Activated B cell treated with CpG ODN at 0.5 μM for 24 hours (primary cell): ENCODE measurements at regions of chr1 and their contacts with region 1.

Region 1: DNA sequence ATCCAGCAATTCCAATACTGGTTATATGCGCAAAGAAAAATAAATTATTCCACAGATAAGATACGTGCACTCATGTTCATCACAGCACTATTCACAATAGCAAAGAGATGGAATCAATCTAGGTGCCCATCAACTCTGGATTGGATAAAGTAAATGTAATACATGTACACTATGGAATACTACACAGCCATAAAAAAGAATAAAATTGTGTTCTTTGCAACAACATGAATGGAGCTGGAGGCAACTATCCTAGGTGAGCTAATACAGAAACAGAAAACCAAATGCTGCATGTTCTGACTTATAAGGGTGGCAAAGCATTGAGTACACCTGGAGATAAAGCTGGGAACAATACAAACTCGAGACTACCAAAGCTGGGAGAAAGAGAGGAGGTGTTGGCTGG is 787.3 kb downstream of the KCNT2 start:
- DNase-seq: no peak
- ATAC-seq: no peak
- H3K4me3 Mint-ChIP-seq: no peak overlapping the region
- H3K27ac Mint-ChIP-seq: no peak overlapping the region
- H3K4me1 Mint-ChIP-seq: no peaks in the 10 kb centered on the region
- H3K27me3 Mint-ChIP-seq: no peaks in the 10 kb centered on the region
- CTCF ChIP-seq: no peak

Region 2: GRCh38 chr1:196007785-196008184 is 186.9 kb after region 1 on chr1:
- CTCF ChIA-PET with region 1: no interaction called
- POLR2A ChIA-PET with region 1: interaction called, 11 read pairs
- intact Hi-C with region 1: no loop called
- DNase-seq: no peak
- ATAC-seq: no peak
- H3K4me3 Mint-ChIP-seq: no peak overlapping the region
- H3K27ac Mint-ChIP-seq: no peak overlapping the region
- H3K4me1 Mint-ChIP-seq: no peaks in the 10 kb centered on the region
- H3K27me3 Mint-ChIP-seq: no peaks in the 10 kb centered on the region
- CTCF ChIP-seq: no peak